Gastrocnemius medialis (tissue), 4 donors: ENCODE measurements at regions of chr6 and their contacts with region 1.

Region 1: DNA sequence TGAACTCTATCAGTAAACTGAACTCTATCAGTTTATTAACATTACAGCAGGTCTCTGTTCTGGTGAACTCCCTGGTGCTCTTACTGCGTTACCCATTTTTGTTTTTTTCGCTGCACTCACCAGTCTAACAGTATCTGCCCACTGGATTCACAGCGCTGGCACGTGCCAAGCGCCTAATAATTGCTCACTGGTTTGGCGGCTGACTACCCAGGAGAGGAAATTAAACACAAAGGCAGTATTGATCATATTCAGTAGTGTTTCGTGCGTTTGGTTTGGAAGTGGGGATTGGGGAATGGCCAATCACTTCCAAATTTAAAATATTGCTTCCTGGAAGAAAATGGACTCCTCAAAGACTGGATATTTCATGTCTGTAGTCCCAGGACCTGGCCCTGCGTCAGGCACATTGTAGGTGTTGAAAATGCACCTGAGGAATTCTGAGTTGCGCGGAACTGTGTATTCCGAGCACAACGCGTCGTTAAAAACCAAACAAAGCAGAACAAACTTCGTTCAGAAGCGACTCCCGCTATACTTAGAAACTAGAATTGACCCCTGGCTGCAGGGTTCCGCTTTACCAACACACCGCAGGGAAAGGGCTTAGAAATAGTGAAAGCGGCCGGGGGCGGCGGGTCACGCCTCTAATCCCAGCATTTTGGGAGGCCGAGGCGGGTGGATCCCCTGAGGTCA is 1.1 kb upstream of the RPS12 start:
- DNase-seq: peak in 1 of 2 donors; percentile 46
- ATAC-seq: peak; percentile 22 to 23
- H3K4me3 ChIP-seq: peak overlapping the region; percentile 64 to 99 (median 90)
- H3K27ac ChIP-seq: peak overlapping the region; percentile 85 to 96 (median 88)
- H3K4me1 ChIP-seq: peaks cover 24 to 32% of the 10 kb centered on the region in 2 donors
- H3K27me3 ChIP-seq: no peaks in the 10 kb centered on the region
- CTCF ChIP-seq: peak in 1 of 5 experiments; percentile 11
- POLR2A ChIP-seq: no peak

Region 2: DNA sequence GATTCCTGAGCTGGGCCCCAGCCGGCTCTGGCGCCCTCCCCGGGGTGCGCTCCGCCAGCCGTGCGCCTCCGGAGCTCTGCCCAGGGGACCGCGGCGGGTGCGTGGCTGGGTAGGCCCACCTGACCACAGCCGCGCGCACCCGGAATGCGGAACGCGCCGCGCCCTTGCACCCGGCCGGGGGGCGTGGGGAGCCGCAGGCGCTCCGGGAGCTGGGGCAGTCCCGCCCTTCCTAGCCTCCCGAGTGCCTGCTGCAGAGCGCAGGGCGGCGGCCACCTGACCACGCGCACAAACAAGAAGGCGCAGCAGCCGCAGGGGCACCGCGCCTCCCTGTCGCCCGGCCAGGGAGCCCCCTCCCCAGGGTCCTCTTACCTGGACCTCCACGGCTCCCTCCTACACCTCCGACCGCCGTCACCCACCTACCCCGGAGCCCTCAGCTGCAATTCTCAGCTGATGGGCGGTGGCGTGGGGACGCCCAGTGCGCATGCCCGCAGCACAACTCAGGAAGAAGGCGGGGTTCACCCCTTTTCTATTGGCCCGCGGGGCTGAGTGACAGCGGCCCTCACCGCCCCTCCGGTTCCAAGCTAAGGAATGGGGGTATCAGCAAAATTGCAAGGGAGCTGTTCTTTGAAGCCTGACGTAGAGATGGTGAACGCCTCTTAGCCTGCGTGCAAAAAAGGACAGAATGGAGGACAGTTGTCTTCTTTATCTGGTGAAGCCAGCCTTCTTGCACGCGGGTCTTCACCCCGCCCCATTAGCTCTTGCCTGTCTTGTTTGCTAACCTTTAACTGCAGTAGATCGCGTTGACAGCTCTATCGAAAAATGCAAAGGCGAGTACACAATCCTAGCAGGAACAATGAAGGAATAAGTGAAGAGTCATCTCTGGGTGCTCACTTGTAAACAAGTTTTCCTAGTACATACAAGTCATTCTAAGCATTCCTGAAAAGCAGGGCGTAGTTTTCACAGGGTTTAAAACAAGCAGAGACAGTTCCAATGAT is 300.4 kb before region 1 on chr6 and contains the start of gene STX7:
- in situ Hi-C with region 1: loop called in 1 of 4 experiments (anchors 25 kb)
- intact Hi-C with region 1: no loop called
- DNase-seq: peak; percentile 78 to 83
- ATAC-seq: peak; percentile 96
- H3K4me3 ChIP-seq: peak within 1 kb of the TSS; percentile 77 to 98 (median 88)
- H3K27ac ChIP-seq: peak within 1 kb of the TSS; percentile 85 to 96 (median 91)
- H3K4me1 ChIP-seq: peaks cover 15 to 21% of the 10 kb centered on the region in 2 donors
- H3K27me3 ChIP-seq: no peaks in the 10 kb centered on the region
- CTCF ChIP-seq: no peak
- POLR2A ChIP-seq: peak; percentile 73 to 79
- total RNA-seq, gene STX7: 18.2 to 64.3 (median 20.6) TPM

Region 3: GRCh38 chr6:132798869-132799538 is 14.3 kb before region 1 on chr6:
- in situ Hi-C with region 1: no loop called
- intact Hi-C with region 1: loop called (anchors 2 kb)
- DNase-seq: peak; percentile 56 to 75
- ATAC-seq: peak; percentile 90
- H3K4me3 ChIP-seq: peak overlapping the region; percentile 65 to 82 (median 71)
- H3K27ac ChIP-seq: no peak overlapping the region
- H3K4me1 ChIP-seq: peaks cover 6 to 7% of the 10 kb centered on the region in 2 donors
- H3K27me3 ChIP-seq: no peaks in the 10 kb centered on the region
- CTCF ChIP-seq: peak; percentile 16 to 77 (median 54)
- POLR2A ChIP-seq: no peak

Region 4: DNA sequence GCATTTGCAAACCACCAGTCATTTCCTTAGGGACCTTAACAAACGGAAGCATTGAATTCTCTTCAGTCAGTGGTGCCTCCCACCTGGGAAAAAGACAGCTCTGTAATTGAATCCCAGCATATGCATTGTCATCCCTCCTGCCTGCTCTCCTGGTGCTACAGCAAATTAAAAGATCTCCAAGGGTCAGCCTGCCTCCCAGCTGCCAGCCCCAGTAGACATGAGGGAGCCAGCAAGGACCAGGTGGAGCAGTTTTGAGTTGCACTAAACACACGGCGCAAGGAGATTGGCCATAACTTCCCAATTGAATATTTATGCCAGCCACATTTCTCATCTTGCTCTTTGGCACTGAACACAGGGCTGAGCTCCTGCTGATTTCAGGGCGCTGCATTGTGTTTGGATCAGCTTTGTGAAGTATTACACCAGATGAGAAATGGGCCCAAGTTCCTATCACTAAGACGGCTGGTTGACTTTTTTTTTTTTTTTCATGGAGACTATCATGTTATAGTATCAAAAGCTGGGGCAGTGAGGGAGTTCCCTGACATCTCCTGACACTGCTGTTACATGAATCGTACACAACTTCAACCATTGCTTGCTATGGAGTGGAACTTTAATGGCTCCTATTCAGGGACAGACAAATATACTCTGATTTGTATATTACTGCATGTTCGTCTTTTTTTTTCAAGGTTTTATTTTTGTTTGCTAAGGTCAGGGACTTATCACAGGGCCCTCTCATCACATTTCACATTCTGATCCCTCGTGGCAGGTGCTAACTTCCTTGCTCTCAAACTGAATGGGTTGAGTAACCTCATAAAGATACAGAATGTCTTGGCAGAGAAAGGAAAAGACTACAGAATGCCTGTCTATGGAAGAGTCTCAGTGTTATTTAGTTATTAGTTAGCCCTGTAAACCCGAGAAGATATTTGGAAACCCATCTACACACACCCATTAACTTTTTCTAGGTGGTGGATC is 619.0 kb after region 1 on chr6:
- in situ Hi-C with region 1: no loop called
- intact Hi-C with region 1: loop called (anchors 10 kb)
- DNase-seq: peak; percentile 81 to 94
- ATAC-seq: peak; percentile 76 to 82
- H3K4me3 ChIP-seq: peak overlapping the region; percentile 5 to 23 (median 20)
- H3K27ac ChIP-seq: peak overlapping the region; percentile 85 to 89 (median 87)
- H3K4me1 ChIP-seq: peaks cover 52 to 65% of the 10 kb centered on the region in 2 donors
- H3K27me3 ChIP-seq: no peaks in the 10 kb centered on the region
- CTCF ChIP-seq: peak in 1 of 5 experiments; percentile 12
- POLR2A ChIP-seq: no peak

Region 5: GRCh38 chr6:134063966-134064445 is 1250.7 kb after region 1 on chr6:
- in situ Hi-C with region 1: loop called in 1 of 4 experiments (anchors 25 kb)
- intact Hi-C with region 1: no loop called
- DNase-seq: peak; percentile 25 to 69
- ATAC-seq: peak; percentile 98
- H3K4me3 ChIP-seq: no peak overlapping the region
- H3K27ac ChIP-seq: peak overlapping the region in 3 of 4 donors; percentile 34 to 77 (median 50)
- H3K4me1 ChIP-seq: peaks cover 7 to 8% of the 10 kb centered on the region in 2 donors
- H3K27me3 ChIP-seq: no peaks in the 10 kb centered on the region
- CTCF ChIP-seq: peak; percentile 54 to 89 (median 75)
- POLR2A ChIP-seq: no peak